GM23248 (cell line): ENCODE measurements at regions of chr16 and their contacts with region 1.

Region 1: GRCh38 chr16:30112197-30113030 is 923 bp downstream of the GDPD3 start:
- DNase-seq: peak; percentile 69
- H3K4me3 ChIP-seq: no peak overlapping the region
- H3K27ac ChIP-seq: no peak overlapping the region
- H3K4me1 ChIP-seq: peaks cover 9% of the 10 kb centered on the region
- H3K27me3 ChIP-seq: no peaks in the 10 kb centered on the region

Region 2: DNA sequence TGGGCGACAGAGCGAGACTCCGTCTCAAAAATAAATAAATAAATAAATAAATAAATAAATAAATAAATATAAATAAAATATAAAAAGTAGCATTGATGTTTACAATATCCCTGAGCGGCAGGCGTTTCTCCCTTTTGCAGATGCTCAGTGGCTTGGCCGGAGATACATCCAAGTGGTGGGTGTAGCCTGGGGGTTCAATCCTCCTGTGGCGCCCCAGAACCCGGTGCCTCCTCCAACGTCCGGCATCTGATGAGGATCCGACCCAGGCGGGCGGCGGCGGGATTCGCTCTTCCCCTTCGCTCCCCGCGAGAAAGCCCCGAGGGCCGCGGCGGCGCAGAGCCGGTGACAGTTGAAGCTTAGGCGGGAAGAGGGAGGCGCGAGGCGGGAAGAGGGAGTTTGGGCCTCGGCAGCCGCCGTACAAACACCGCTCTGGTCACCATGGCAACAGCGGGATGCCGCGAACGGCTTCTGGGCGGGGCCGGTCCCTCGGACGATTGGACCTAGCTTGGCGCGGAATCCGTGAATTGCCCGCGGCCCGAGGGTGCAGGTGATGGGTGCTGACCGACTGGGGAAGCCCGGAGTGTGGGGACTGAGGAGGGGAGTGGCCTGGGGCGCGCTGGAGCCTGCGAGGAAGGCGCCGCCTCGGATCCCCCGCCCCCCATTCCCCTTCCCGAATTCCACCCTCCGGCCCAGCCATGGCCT is 59.6 kb before region 1 on chr16:
- in situ Hi-C with region 1: no loop called
- DNase-seq: peak; percentile 98
- H3K4me3 ChIP-seq: peak overlapping the region; percentile 85
- H3K27ac ChIP-seq: peak overlapping the region; percentile 80
- H3K4me1 ChIP-seq: peaks cover 15% of the 10 kb centered on the region
- H3K27me3 ChIP-seq: no peaks in the 10 kb centered on the region

Region 3: DNA sequence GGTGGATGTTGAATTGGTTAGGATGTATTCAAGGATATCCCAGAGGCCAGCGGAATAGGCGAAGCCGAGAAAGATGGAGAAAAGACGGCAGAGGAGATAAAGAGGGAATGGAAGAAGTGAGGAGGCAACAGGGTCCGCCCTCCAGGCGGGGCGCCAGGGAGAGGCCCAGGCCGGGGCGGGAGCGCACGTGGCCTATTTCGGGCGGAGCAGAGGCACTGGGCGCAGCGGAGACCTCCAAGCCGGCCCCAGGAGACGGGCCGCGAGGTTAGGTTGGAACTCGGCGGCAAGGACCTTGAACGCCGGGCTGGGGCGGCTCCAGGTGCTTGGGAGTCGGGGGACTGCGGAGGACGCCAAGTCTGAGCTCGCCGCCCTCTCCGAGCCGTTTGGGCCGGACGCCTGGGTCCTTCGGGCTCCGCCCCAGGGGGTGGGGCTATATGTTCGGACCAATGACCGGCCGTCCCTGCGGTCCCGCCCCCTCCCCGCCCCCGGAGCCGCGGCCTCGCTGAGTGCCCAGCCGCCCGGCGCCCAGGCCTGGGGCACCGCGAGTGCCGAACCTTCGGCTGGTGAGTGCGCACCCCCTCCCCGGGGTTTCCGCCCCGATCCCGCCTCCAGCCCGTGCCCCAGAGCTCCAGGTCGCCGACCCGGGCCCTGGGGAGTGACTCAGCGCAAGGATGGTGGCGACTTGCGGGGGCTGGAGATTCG is 294.8 kb after region 1 on chr16 and contains the start of gene ZNF771:
- in situ Hi-C with region 1: loop called (anchors 25 kb)
- DNase-seq: peak; percentile 94
- H3K4me3 ChIP-seq: peak within 1 kb of the TSS; percentile 78
- H3K27ac ChIP-seq: peak within 1 kb of the TSS; percentile 79
- H3K4me1 ChIP-seq: peaks cover 22% of the 10 kb centered on the region
- H3K27me3 ChIP-seq: no peaks in the 10 kb centered on the region
- total RNA-seq, gene ZNF771: 17.6 and 33.1 TPM in 2 replicates